Activated T-helper 1 cell treated with anti-CD3 and anti-CD28 coated beads, Interleukin-12 subunit alpha, Interleukin-12 subunit beta, Interleukin-2, Interleukin-4 antibody, amounts not matched to agents 30 ng/mL and 10 ng/mL and 1 ng/mL, durations not matched to agents 14 hours and 24 hours and 36 hours (primary cell): ENCODE measurements at regions of chr5 and their contacts with region 1.

Region 1: GRCh38 chr5:39283231-39283818 is 64.0 kb upstream of the FYB1 start:
- DNase-seq: peak; percentile 54
- H3K4me3 Mint-ChIP-seq: no peak overlapping the region
- H3K27ac Mint-ChIP-seq: no peak overlapping the region
- H3K4me1 Mint-ChIP-seq: peaks cover 22% of the 10 kb centered on the region
- H3K27me3 Mint-ChIP-seq: peaks cover 12% of the 10 kb centered on the region

Region 2: GRCh38 chr5:39570403-39571027 is 287.2 kb after region 1 on chr5:
- intact Hi-C with region 1: loop called (anchors 1 kb)
- DNase-seq: no peak
- H3K4me3 Mint-ChIP-seq: no peak overlapping the region
- H3K27ac Mint-ChIP-seq: no peak overlapping the region
- H3K4me1 Mint-ChIP-seq: no peaks in the 10 kb centered on the region
- H3K27me3 Mint-ChIP-seq: peaks cover 6% of the 10 kb centered on the region